Activated CD8-positive, alpha-beta T cell treated with anti-CD3 and anti-CD28 coated beads for 36 hours (primary cell): ENCODE measurements at regions of chr9 and their contacts with region 1.

Region 1: DNA sequence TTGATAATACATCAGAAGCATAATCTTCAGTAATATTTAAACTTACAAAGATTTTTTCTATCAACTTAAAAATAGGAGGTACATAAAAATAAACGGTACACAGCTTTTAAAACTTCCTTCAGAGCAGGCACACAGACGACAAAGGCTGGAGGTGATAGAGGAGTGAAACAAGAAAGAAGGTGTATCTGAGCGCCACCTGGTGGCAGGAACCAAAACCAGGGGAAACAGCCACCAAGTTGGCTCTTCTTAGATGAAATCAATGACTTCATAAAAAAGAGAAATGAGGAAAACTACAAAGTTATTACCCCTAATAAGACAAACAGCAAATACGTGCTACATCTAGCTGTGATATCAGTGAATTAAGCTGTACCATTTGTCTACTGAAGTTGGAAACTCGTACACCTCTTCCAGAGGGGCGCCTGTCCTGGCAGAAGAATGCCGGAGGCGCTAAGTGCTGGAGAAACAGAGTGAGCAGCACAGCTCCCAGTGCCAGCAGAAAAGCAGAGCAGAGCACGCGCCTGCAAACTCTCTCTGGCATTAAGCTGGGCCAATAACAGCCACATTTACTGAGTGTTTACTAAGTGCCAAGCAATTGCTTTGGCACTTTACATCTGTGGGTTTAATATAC is 85.9 kb downstream of the SETX start:
- DNase-seq: peak; percentile 89
- ATAC-seq: peak; percentile 84
- H3K4me3 Mint-ChIP-seq: no peak overlapping the region
- H3K27ac Mint-ChIP-seq: peak overlapping the region; percentile 63
- H3K4me1 Mint-ChIP-seq: peaks cover 12% of the 10 kb centered on the region
- H3K27me3 Mint-ChIP-seq: no peaks in the 10 kb centered on the region
- CTCF ChIP-seq: peak; percentile 96

Region 2: GRCh38 chr9:131762356-131762932 is 506.4 kb before region 1 on chr9:
- CTCF ChIA-PET with region 1: interaction called, 10 read pairs
- POLR2A ChIA-PET with region 1: no interaction called
- intact Hi-C with region 1: no loop called
- DNase-seq: peak; percentile 79
- ATAC-seq: peak; percentile 90
- H3K4me3 Mint-ChIP-seq: no peak overlapping the region
- H3K27ac Mint-ChIP-seq: no peak overlapping the region
- H3K4me1 Mint-ChIP-seq: peaks cover 11% of the 10 kb centered on the region
- H3K27me3 Mint-ChIP-seq: peaks cover 10% of the 10 kb centered on the region
- CTCF ChIP-seq: peak; percentile 97

Region 3: DNA sequence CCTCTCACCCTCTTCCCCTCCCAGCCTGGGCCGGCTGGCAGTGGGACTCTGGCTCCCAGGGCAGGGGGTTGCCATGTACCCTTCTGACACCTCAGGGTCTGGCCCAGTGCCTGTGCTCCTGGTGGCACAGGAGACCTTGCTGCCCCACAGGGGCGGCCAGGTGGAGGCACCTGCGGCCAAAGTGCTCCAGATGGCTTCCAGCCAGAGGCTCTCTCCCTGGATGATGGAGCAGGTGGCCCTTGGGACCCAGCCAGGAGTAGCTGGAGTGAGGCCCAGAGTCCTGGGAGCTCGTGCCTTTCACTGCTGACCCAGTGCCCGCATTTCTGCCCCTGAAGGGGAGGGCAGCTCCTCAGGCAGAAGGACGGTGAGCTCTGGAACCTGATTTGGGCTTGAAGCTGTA is 19.7 kb before region 1 on chr9:
- CTCF ChIA-PET with region 1: interaction called, 30 read pairs
- POLR2A ChIA-PET with region 1: no interaction called
- intact Hi-C with region 1: no loop called
- DNase-seq: no peak
- ATAC-seq: no peak
- H3K4me3 Mint-ChIP-seq: no peak overlapping the region
- H3K27ac Mint-ChIP-seq: no peak overlapping the region
- H3K4me1 Mint-ChIP-seq: peaks cover 3% of the 10 kb centered on the region
- H3K27me3 Mint-ChIP-seq: peaks cover 8% of the 10 kb centered on the region
- CTCF ChIP-seq: no peak

Region 4: GRCh38 chr9:132295181-132295580 is 26.3 kb after region 1 on chr9:
- CTCF ChIA-PET with region 1: interaction called, 20 read pairs
- POLR2A ChIA-PET with region 1: interaction called, 3 read pairs
- intact Hi-C with region 1: no loop called
- DNase-seq: no peak
- ATAC-seq: no peak
- H3K4me3 Mint-ChIP-seq: no peak overlapping the region
- H3K27ac Mint-ChIP-seq: peak overlapping the region; percentile 13
- H3K4me1 Mint-ChIP-seq: peaks cover 16% of the 10 kb centered on the region
- H3K27me3 Mint-ChIP-seq: no peaks in the 10 kb centered on the region
- CTCF ChIP-seq: no peak

Region 5: DNA sequence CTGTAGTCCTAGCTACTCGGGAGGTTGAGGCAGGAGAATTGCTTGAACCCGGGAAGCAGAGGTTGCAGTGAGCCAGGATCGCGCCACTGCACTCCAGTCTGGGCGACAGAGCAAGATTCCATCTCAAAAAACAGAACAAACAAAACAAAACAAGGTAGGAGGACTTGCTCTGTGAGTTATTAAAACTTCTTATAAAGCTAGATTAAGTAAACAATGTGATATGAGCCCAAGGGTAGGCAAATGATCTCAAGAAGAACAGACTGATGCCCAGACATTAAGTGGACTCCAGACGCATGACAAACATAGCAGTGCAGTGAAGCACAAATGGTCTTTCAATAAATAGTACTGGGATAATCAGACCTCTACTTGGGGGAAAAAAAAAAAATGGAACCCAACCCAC is 40.2 kb after region 1 on chr9:
- CTCF ChIA-PET with region 1: interaction called, 13 read pairs
- POLR2A ChIA-PET with region 1: no interaction called
- intact Hi-C with region 1: no loop called
- DNase-seq: no peak
- ATAC-seq: no peak
- H3K4me3 Mint-ChIP-seq: no peak overlapping the region
- H3K27ac Mint-ChIP-seq: peak overlapping the region; percentile 27
- H3K4me1 Mint-ChIP-seq: peaks cover 18% of the 10 kb centered on the region
- H3K27me3 Mint-ChIP-seq: no peaks in the 10 kb centered on the region
- CTCF ChIP-seq: no peak